H1 (cell line): ENCODE measurements at regions of chr7 and their contacts with region 1.

Region 1: GRCh38 chr7:41977151-41977651 is 259.8 kb downstream of the GLI3 start:
- DNase-seq: peak in 1 of 2 experiments; percentile 55
- H3K4me3 ChIP-seq: no peak overlapping the region
- H3K27ac ChIP-seq: peak overlapping the region; percentile 13; the same call in 1 of the 2 replicates
- H3K4me1 ChIP-seq: peaks cover 0 to 11% (median 4%) of the 10 kb centered on the region in 4 experiments; a peak in 5 of 7 replicates
- H3K27me3 ChIP-seq: no peaks in the 10 kb centered on the region
- CTCF ChIP-seq: peak; percentile 27 to 67 (median 60)
- EP300 ChIP-seq: no peak
- POLR2A ChIP-seq: no peak
- RAD21 ChIP-seq: peak; percentile 64 to 78

Region 2: GRCh38 chr7:41940760-41941343 is 36.3 kb before region 1 on chr7:
- CTCF ChIA-PET with region 1: interaction called, 117 read pairs
- POLR2A ChIA-PET with region 1: no interaction called
- DNase-seq: peak in 1 of 2 experiments; percentile 78
- H3K4me3 ChIP-seq: no peak overlapping the region
- H3K27ac ChIP-seq: no peak overlapping the region
- H3K4me1 ChIP-seq: peaks cover 0 to 7% (median 5%) of the 10 kb centered on the region in 4 experiments; a peak in 3 of 7 replicates
- H3K27me3 ChIP-seq: peaks cover 0 to 4% (median 3%) of the 10 kb centered on the region in 4 experiments; a peak in 3 of 7 replicates
- CTCF ChIP-seq: peak; percentile 70 to 95 (median 84)
- EP300 ChIP-seq: no peak
- POLR2A ChIP-seq: no peak
- RAD21 ChIP-seq: peak; percentile 93 to 94

Region 3: GRCh38 chr7:41996381-41997035 is 19.3 kb after region 1 on chr7:
- CTCF ChIA-PET with region 1: interaction called, 33 read pairs
- POLR2A ChIA-PET with region 1: no interaction called
- DNase-seq: no peak
- H3K4me3 ChIP-seq: no peak overlapping the region
- H3K27ac ChIP-seq: no peak overlapping the region
- H3K4me1 ChIP-seq: no peaks in the 10 kb centered on the region; a peak in 1 of 7 replicates
- H3K27me3 ChIP-seq: no peaks in the 10 kb centered on the region
- CTCF ChIP-seq: no peak
- EP300 ChIP-seq: no peak
- POLR2A ChIP-seq: no peak
- RAD21 ChIP-seq: no peak

Region 4: GRCh38 chr7:42020061-42020460 is 42.9 kb after region 1 on chr7:
- CTCF ChIA-PET with region 1: interaction called, 33 read pairs
- POLR2A ChIA-PET with region 1: no interaction called
- DNase-seq: no peak
- H3K4me3 ChIP-seq: no peak overlapping the region
- H3K27ac ChIP-seq: no peak overlapping the region
- H3K4me1 ChIP-seq: peaks cover 0 to 7% (median 2%) of the 10 kb centered on the region in 4 experiments; a peak in 3 of 7 replicates
- H3K27me3 ChIP-seq: no peaks in the 10 kb centered on the region
- CTCF ChIP-seq: no peak
- EP300 ChIP-seq: no peak
- POLR2A ChIP-seq: no peak
- RAD21 ChIP-seq: no peak

Region 5: DNA sequence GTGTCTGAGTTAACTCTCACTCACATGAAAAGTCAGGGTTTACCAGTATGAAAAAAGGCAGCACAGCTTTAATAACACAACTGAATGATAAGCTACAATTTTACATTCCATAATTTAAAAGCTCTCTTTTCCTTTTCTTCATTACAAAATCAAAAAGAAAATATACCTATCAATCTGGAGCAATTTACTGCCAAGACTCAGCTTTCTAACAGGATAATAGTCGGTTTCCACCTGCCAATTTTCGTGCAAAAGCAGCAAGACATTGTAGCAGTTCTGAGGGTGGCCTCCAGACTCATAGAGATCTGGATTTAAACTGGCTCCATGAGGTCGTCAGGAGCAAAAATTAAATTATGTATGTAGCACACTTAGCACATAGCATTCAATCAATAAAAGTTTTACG is 68.8 kb after region 1 on chr7:
- CTCF ChIA-PET with region 1: no interaction called
- POLR2A ChIA-PET with region 1: no interaction called
- DNase-seq: no peak
- H3K4me3 ChIP-seq: no peak overlapping the region
- H3K27ac ChIP-seq: no peak overlapping the region
- H3K4me1 ChIP-seq: peaks cover 0 to 7% (median 0%) of the 10 kb centered on the region in 4 experiments; a peak in 1 of 7 replicates
- H3K27me3 ChIP-seq: no peaks in the 10 kb centered on the region
- CTCF ChIP-seq: no peak
- EP300 ChIP-seq: no peak
- POLR2A ChIP-seq: no peak
- RAD21 ChIP-seq: no peak

Region 6: GRCh38 chr7:42227936-42228591 is 250.9 kb after region 1 on chr7:
- CTCF ChIA-PET with region 1: interaction called, 14 read pairs
- POLR2A ChIA-PET with region 1: no interaction called
- DNase-seq: peak in 1 of 2 experiments; percentile 76
- H3K4me3 ChIP-seq: peak overlapping the region; percentile 42 to 67 (median 52)
- H3K27ac ChIP-seq: peak overlapping the region; percentile 87
- H3K4me1 ChIP-seq: peaks cover 5 to 30% (median 22%) of the 10 kb centered on the region in 4 experiments; a peak in 6 of 7 replicates
- H3K27me3 ChIP-seq: no peaks in the 10 kb centered on the region
- CTCF ChIP-seq: no peak
- EP300 ChIP-seq: no peak
- POLR2A ChIP-seq: no peak; a peak in 1 of 3 replicates
- RAD21 ChIP-seq: no peak

Region 7: DNA sequence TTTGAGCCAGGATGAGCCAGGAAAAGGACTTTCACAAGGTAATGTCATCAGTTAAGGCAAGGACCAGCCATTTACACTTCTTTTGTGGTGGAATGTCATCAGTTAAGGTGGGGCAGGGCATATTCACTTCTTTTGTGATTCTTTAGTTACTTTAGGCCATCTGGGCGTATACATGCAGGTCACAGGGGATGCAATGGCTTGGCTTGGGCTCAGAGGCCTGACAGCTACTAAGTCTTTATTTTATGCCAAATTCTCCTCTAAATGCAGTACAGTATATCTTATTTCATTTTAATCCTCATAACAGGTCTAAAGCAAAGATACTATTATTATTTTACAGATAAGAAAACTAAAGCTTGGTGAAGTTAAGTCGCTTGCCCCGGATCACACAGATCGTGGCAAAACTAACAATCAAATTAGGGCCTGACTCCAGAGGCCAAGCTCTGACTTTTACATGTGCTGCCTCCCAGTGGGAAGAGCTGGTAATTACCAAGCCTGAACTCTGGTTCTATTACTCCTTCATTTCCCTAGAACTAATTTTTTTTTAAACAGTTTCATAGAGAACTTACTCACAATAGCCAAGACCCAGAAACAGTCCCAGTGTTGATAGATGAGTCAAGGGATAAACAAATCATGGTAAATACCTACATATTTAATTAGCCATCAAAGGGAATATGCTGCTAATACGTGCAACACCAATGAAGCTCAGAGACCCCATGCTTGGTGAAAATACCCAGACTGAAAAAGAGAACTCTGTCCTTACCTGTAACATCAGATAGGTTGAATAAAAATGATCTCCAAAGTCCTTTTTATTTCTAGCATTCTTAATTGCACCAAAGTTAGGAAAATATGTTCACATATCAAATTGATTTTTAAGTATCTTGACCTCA is 899.2 kb after region 1 on chr7:
- CTCF ChIA-PET with region 1: interaction called, 10 read pairs
- POLR2A ChIA-PET with region 1: no interaction called
- DNase-seq: no peak
- H3K4me3 ChIP-seq: no peak overlapping the region
- H3K27ac ChIP-seq: no peak overlapping the region
- H3K4me1 ChIP-seq: no peaks in the 10 kb centered on the region
- H3K27me3 ChIP-seq: no peaks in the 10 kb centered on the region
- CTCF ChIP-seq: peak; percentile 22 to 70 (median 67)
- EP300 ChIP-seq: no peak
- POLR2A ChIP-seq: no peak
- RAD21 ChIP-seq: peak; percentile 68 to 79